T-cell (primary cell): ENCODE measurements at regions of chr12 and their contacts with region 1.

Region 1: GRCh38 chr12:1680804-1681492 is 9.9 kb upstream of the ADIPOR2 start:
- DNase-seq: no peak
- ATAC-seq: no peak
- H3K4me3 ChIP-seq: no peak overlapping the region
- H3K4me3 Mint-ChIP-seq: no peak overlapping the region
- H3K27ac ChIP-seq: no peak overlapping the region
- H3K27ac Mint-ChIP-seq: no peak overlapping the region
- H3K4me1 ChIP-seq: no peaks in the 10 kb centered on the region
- H3K4me1 Mint-ChIP-seq: no peaks in the 10 kb centered on the region
- H3K27me3 ChIP-seq: no peaks in the 10 kb centered on the region
- H3K27me3 Mint-ChIP-seq: no peaks in the 10 kb centered on the region

Region 2: DNA sequence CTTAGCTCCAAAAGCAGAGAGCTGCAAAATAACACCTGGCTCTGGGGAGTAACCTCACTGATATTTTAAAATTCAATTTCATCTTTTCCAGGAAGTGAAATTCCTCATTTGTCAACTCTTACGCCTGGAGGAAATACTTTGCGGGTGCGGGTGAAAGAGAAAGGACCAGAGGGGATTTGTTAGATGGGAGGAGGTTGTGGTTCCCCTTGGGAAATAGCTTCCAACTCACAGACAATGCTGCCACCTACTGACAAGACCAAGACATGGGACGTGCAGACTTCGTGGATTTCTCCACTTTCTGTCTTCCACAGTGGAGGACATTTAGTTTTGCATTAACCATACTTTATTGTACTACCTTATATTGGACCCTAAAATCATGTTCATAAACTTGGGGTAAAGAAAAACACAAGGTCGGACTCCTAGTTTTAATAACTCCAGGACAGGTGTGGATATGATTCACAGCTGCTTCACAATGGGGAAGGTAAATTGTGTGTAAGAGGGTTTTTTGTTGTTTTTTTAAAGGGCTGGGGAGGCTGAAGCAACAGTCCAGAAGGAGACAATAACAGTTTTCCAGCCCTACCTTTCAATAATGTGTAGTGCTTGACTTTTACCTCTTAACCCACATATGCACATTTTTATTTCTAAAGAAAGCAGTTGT is 97.4 kb before region 1 on chr12:
- CTCF ChIA-PET with region 1: no interaction called
- POLR2A ChIA-PET with region 1: interaction called in 1 of 2 experiments, 14 read pairs
- DNase-seq: peak in 32 of 35 experiments; percentile 24 to 87 (median 53)
- ATAC-seq: peak; percentile 68 to 79 (median 74)
- H3K4me3 ChIP-seq: no peak overlapping the region
- H3K4me3 Mint-ChIP-seq: peak overlapping the region in 1 of 3 donors; percentile 7
- H3K27ac ChIP-seq: no peak overlapping the region
- H3K27ac Mint-ChIP-seq: peak overlapping the region in 1 of 2 donors; percentile 48
- H3K4me1 ChIP-seq: peaks cover 0 to 9% of the 10 kb centered on the region in 2 experiments
- H3K4me1 Mint-ChIP-seq: peaks cover 25 to 26% (median 26%) of the 10 kb centered on the region in 3 donors
- H3K27me3 ChIP-seq: no peaks in the 10 kb centered on the region
- H3K27me3 Mint-ChIP-seq: no peaks in the 10 kb centered on the region

Region 3: DNA sequence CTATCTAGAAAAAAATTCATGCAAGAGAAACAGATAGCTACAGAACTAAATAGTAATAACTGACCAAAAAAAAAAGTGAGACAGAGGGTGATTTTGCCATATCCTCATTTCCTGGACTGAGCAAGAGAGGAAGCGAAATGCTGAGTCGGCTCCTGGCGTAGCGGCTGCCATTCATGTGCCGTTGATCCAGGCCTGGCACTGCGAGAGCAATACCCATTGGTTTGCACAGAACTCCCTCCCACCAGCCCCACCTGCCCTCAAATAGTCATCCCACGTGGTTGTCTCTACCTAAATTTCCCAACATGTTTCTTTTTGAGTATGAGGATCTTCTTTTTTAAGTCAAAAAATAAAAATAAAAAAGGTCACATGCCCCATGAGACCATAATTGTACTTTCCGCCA is 61.4 kb before region 1 on chr12:
- CTCF ChIA-PET with region 1: no interaction called
- POLR2A ChIA-PET with region 1: interaction called in 1 of 2 experiments, 13 read pairs
- DNase-seq: no peak
- ATAC-seq: no peak
- H3K4me3 ChIP-seq: no peak overlapping the region
- H3K4me3 Mint-ChIP-seq: no peak overlapping the region
- H3K27ac ChIP-seq: no peak overlapping the region
- H3K27ac Mint-ChIP-seq: no peak overlapping the region
- H3K4me1 ChIP-seq: no peaks in the 10 kb centered on the region
- H3K4me1 Mint-ChIP-seq: peaks cover 3 to 11% (median 9%) of the 10 kb centered on the region in 3 donors
- H3K27me3 ChIP-seq: peaks cover 0 to 10% of the 10 kb centered on the region in 2 experiments
- H3K27me3 Mint-ChIP-seq: peaks cover 4 to 9% of the 10 kb centered on the region in 2 donors